ENCODE measurements at regions of chr14 and their contacts with region 1.

Region 1: GRCh38 chr14:20609215-20610001 is 18.2 kb upstream of the RNASE12 start:
- DNase-seq: peak; percentile 77
- CTCF ChIP-seq: peak; percentile 89

Region 2: GRCh38 chr14:20327005-20327869 is 282.2 kb before region 1 on chr14:
- in situ Hi-C with region 1: loop called (anchors 10 kb)
- DNase-seq: peak; percentile 62
- CTCF ChIP-seq: peak; percentile 60